PC-9 (cell line): ENCODE measurements at regions of chr7 and their contacts with region 1.

Region 1: DNA sequence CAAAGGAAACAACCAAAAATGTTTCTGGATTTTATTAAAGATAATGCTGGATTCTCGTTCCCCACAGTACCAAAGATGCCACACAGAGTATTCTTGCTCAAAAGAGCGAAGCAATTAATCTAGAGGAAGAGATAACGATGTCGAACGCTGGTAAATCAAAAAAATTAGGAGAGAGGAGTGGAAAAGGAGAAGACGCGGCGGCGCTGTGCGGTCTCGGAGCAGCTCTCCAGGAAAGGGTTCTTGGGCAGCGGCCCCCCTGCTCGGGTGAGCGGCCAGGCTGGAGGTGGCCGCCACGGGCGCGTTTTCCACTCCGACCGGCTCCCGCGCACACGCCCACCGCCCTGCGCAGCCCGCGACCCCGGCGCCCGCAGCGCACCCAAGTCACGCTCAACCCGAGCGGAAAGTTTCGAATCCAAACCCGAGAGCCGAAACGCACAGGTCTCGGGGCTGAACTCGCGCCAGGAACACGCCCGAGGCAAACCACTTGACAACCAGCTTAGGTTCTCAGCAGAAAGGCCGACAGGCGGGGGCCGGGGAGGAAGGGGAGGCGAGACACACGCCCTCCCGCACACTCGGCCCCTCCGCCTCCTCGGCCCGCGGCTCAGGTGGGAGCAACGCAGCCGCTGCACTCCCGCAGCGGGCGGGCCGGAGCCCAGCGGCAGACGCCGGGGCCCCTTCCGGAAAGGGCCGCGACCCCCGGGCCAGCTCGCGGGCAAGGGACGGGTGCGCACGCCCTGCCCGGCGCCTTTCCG is 924 bp downstream of the SRPK2 start:
- DNase-seq: peak; percentile 42 to 62
- H3K4me3 ChIP-seq: peak overlapping the region; percentile 74
- H3K27ac ChIP-seq: no peak overlapping the region
- H3K4me1 ChIP-seq: peaks cover 11% of the 10 kb centered on the region
- H3K27me3 ChIP-seq: no peaks in the 10 kb centered on the region
- CTCF ChIP-seq: no peak

Region 2: GRCh38 chr7:104973909-104974415 is 413.8 kb before region 1 on chr7:
- CTCF ChIA-PET with region 1: no interaction called
- POLR2A ChIA-PET with region 1: no interaction called
- intact Hi-C with region 1: no loop called
- DNase-seq: no peak
- H3K4me3 ChIP-seq: no peak overlapping the region
- H3K27ac ChIP-seq: no peak overlapping the region
- H3K4me1 ChIP-seq: no peaks in the 10 kb centered on the region
- H3K27me3 ChIP-seq: no peaks in the 10 kb centered on the region
- CTCF ChIP-seq: no peak

Region 3: GRCh38 chr7:105304040-105304895 is 83.5 kb before region 1 on chr7:
- CTCF ChIA-PET with region 1: no interaction called
- POLR2A ChIA-PET with region 1: interaction called, 21 read pairs
- intact Hi-C with region 1: no loop called
- DNase-seq: no peak
- H3K4me3 ChIP-seq: no peak overlapping the region
- H3K27ac ChIP-seq: no peak overlapping the region
- H3K4me1 ChIP-seq: no peaks in the 10 kb centered on the region
- H3K27me3 ChIP-seq: no peaks in the 10 kb centered on the region
- CTCF ChIP-seq: no peak

Region 4: DNA sequence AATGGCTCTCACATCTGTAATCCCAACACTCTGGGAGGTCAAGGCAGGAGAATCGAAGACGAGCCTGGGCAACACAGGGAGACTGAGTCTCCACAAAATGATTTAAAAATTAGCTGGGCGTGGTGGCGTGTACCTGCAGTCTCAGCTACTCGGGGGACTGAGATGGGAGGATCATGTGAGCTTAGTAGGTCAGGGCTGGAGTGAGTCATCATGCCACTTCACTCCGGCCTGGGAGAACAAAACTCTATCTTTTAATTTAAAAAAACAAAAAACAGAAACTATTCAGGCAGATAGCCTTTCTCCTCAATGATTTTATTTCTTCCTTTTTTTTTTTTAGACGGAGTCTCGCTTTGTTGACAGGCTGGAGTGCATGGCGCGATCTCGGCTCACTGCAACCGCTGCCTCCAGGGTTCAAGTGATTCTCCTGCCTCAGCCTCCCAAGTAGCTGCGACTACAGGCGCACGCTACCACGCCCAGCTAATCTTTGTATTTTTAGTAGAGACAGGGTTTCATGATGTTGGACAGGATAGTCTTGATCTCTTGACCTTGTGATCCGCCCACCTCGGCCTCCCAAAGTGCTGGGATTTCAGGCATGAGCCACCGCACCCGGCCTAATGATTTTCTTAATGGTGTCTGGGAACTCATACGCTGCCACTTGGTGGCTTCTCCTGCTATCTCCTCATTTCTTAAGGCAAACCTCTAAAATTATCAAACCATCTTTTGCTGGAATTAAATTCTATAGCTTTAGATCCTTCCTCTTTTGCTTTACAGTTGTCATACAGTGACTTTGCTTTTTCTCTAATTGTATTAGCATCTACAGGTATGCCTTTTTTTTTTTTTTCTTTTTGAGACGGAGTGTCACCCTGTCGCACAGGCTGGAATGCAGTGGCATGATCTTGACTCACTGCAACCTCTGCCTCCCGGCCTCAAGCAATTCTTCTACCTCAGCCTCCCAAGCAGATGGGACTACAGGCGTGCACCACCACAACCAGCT is 22.0 kb before region 1 on chr7:
- CTCF ChIA-PET with region 1: interaction called, 15 read pairs
- POLR2A ChIA-PET with region 1: interaction called, 4 read pairs
- intact Hi-C with region 1: no loop called
- DNase-seq: no peak
- H3K4me3 ChIP-seq: no peak overlapping the region
- H3K27ac ChIP-seq: no peak overlapping the region
- H3K4me1 ChIP-seq: no peaks in the 10 kb centered on the region
- H3K27me3 ChIP-seq: no peaks in the 10 kb centered on the region
- CTCF ChIP-seq: no peak

Region 5: DNA sequence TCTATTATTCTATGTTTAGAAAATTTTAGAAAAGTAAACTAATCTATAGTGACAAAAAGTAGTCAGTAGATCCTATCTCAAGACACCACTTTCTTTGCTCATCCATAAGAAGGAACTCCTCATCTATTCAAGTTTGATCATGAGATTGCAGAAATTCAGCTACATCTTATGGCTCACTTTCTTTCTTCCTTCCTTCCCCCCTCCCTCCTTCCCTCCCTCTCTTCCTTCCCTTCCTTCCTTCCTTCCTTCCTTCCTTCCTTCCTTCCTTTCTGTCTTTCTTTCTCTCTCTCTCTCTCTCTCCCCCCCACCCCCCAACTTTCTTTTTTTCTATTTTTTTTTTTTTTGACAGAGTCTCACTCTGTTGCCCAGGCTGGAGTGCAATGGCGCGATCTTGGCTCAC is 36.2 kb after region 1 on chr7:
- CTCF ChIA-PET with region 1: interaction called, 15 read pairs
- POLR2A ChIA-PET with region 1: no interaction called
- intact Hi-C with region 1: no loop called
- DNase-seq: no peak
- H3K4me3 ChIP-seq: no peak overlapping the region
- H3K27ac ChIP-seq: no peak overlapping the region
- H3K4me1 ChIP-seq: no peaks in the 10 kb centered on the region
- H3K27me3 ChIP-seq: no peaks in the 10 kb centered on the region
- CTCF ChIP-seq: no peak